ENCODE measurements at regions of chr9 and their contacts with region 1.

Region 1: GRCh38 chr9:81492710-81493447 is 196.5 kb downstream of the TLE1 start:
- DNase-seq: peak; percentile 96
- H3K4me3 ChIP-seq: no peak overlapping the region
- H3K27ac ChIP-seq: no peak overlapping the region
- H3K4me1 ChIP-seq: peaks cover 25% of the 10 kb centered on the region
- H3K27me3 ChIP-seq: peaks cover 3% of the 10 kb centered on the region
- CTCF ChIP-seq: no peak

Region 2: DNA sequence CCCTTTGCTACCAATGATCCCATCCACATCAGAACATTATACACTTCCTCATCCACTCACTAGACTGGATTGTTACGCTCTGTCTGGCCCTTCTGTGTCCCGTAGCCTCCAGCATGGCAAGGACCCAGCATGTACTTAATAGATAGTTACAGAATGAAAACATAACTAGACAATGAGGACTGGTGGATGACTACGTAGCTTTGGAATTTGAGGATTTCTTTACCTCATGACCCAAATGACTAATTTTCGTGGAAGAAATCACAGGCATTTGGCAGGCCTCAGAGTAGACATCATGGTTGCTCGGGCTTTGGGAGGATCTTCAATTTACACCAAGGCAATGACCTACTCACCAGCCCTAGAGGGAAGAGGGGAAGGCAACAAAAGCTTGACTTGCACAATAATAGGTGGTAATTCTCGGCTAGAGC is 103.3 kb before region 1 on chr9:
- CTCF ChIA-PET with region 1: no interaction called
- dilution Hi-C with region 1: no loop called
- in situ Hi-C with region 1: no loop called
- intact Hi-C with region 1: loop called (anchors 5 kb)
- DNase-seq: peak; percentile 89
- H3K4me3 ChIP-seq: no peak overlapping the region
- H3K27ac ChIP-seq: peak overlapping the region; percentile 39
- H3K4me1 ChIP-seq: peaks cover 34% of the 10 kb centered on the region
- H3K27me3 ChIP-seq: no peaks in the 10 kb centered on the region
- CTCF ChIP-seq: no peak

Region 3: DNA sequence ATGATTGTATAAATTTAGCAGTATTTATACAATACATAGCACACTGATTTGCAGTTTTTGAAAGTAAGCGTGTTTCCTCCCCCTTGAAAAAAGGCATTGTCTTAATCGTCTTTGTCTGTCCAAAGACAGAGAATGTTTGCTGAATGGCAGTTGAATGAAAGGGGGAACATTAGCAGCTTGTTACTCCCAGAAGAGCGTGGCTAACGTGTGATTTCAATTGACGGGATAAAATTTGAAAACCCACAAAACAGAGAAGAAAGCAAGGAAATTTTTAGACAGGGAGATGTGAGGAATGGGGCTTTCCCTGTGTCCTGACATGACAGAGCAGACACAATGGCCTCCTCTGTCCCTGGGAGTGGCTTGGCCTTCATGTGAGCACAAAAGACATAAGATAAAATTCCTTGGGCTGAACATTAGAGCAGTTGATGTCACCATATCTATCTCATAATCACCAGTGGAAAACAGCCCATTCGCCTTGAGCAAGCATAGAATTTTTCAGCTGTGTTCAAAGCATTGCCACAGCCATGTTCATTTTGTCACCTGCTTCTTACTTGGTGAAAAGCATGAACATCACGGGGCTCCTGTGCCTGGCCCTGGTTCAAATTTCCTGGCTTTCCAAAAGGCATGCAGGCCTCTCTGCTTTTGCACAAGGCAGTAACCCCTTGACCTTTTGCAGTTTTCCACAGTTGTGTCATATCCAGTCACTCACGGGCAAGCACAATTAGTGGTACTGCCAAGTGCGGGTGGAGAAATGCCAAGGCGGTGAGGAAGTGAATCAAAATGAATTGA is 69.5 kb after region 1 on chr9:
- CTCF ChIA-PET with region 1: no interaction called
- dilution Hi-C with region 1: no loop called
- in situ Hi-C with region 1: no loop called
- intact Hi-C with region 1: no loop called
- DNase-seq: peak; percentile 91
- H3K4me3 ChIP-seq: no peak overlapping the region
- H3K27ac ChIP-seq: peak overlapping the region; percentile 40
- H3K4me1 ChIP-seq: peaks cover 59% of the 10 kb centered on the region
- H3K27me3 ChIP-seq: no peaks in the 10 kb centered on the region
- CTCF ChIP-seq: no peak